Posterior vena cava (tissue), 2 donors: ENCODE measurements at regions of chr13 and their contacts with region 1.

Region 1: DNA sequence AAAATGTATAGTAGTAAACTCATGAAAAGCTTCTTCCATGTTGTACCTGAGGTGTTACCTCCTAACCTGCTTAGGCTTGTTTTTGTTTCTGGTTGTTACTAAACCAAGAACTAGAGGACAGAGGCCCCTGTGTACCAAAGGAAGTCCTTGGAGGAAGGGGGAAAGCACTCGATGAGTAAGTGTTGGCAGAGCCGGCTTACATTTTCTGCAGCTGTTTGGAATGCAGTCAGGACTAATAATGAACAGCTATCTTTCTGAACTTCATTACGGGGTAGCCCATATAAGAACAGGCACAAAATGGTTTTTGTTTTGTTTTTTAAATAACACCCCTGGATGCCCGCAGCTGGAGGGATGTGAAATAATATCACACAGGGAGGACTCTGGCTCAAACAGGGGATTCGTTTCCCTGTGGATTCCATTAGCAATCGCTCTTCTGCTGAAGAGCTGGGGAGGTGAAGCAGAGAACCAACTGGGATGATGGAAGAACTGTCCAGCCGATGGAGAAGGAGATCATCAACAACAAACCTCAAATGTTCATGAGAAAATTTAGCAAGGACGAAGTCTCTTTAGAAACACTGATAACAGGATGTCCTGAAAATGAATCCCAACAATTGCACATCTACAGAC is 214.2 kb upstream of the MAB21L1 start:
- DNase-seq: no peak

Region 2: DNA sequence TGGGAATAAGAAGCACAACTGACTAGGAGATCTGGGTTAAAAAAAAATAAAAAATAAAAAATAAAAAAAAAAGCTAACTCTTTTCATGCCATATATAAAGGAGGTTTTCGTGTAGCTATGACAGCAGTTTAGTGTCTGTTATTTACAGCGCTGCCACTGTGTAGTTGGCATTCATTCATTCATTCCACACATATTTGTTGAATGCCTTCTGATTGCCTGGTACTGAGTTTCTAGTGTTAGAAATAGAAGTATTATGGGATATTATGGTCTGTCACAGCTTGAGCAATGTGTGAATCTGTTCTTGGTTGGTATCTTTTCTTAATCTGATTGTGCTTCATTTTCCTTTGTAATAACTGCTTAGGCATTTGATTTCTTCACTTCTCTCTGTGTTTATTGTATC is 511.2 kb before region 1 on chr13:
- intact Hi-C with region 1: no loop called
- DNase-seq: no peak

Region 3: GRCh38 chr13:35659796-35660195 is 30.9 kb before region 1 on chr13:
- intact Hi-C with region 1: loop called in 1 of 2 experiments (anchors 1 kb)
- DNase-seq: no peak